ENCODE measurements at regions of chr2 and their contacts with region 1.

Region 1: DNA sequence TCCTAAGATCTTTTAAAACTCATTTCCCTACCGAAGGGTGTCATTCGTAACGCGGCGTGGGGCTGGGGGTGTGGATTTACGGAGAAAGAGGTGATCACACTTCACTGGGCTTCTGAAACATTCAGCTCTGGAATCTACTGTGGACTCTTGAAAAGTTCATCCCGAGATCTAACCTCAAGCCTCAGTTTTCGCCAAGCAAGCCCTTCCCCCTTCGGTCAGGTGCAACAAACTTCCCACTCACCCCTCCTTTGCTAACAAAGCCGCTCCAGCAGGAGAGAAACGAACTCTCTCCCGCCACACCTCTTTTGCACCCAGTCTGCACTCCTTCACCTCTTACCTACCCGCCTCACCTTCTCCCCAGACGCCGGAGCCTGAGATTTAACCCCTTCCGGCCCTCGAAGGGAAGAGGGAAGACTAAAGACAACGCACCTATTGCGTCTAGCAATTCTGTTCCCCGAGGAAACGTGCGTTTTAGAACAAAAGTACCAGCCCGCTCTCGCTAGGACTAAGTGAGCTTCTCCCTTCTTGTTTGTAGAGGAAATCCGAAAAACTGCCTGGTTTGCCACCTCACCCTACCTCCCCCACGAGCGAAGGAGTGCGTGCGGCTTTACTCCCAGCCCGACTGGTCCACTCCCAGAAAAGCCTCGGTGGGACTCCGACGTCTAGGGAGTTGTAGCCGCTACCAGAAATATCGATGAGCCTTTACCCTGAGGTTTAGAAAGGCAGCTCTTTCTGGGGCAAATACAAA is 538 bp upstream of the PEX13 start:
- DNase-seq: peak; percentile 92
- H3K4me3 Mint-ChIP-seq: peak overlapping the region; percentile 99
- H3K27ac Mint-ChIP-seq: peak overlapping the region; percentile 99
- H3K4me1 Mint-ChIP-seq: peaks cover 32% of the 10 kb centered on the region
- H3K27me3 Mint-ChIP-seq: no peaks in the 10 kb centered on the region

Region 2: GRCh38 chr2:60756191-60757041 is 260.6 kb before region 1 on chr2 and contains the start of gene PAPOLG:
- intact Hi-C with region 1: loop called (anchors 1 kb)
- DNase-seq: peak; percentile 99
- H3K4me3 Mint-ChIP-seq: peak within 1 kb of the TSS; percentile 97
- H3K27ac Mint-ChIP-seq: peak within 1 kb of the TSS; percentile 99
- H3K4me1 Mint-ChIP-seq: peaks cover 29% of the 10 kb centered on the region
- H3K27me3 Mint-ChIP-seq: no peaks in the 10 kb centered on the region
- total RNA-seq, gene PAPOLG: 18.1 and 21.6 TPM in 2 replicates

Region 3: DNA sequence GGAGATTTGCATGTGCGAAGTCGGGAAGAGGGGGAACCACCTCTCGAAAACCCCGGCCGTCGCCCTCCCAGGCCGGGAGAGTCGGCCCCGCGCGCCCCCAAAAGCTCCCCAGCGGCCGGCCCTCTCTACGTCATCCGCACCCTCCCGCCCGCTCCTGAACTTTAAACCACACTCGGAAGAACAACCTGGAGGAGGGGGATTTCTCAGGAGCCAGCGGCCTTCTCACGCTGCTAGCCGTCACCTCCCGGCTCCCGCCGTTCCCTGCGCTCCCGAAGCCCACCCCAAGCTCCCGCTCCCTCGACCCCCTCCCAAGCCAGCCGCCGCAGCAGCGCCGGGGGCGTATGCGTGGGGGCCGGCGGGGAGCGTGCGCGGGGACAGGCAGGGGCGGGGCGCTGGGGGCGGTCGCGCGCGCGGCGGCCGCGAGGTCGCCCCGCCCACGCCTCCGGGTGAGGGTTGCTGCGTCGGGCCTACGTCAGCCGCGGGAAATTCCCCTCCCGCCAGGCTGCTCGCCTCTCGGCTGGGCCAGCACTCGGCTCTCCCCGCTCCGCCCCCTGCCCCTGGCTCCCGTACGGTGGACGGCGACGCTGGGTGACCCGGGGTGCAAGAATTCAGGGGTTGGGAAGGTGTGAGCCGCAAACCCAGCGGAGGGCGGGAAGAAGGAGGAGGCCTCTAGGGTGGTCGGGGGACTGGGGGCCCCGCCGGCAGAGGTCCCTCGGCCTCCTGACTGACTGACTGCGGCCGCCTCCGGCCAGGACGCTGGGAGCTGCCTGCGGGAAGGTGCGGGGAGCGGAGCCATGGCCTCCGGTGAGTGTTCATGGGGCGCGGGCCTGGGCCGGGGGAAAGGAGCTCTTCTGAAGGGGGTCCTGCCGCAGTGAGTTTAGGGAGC is 135.7 kb before region 1 on chr2 and contains the start of gene REL:
- intact Hi-C with region 1: loop called (anchors 2 kb)
- DNase-seq: peak; percentile 97
- H3K4me3 Mint-ChIP-seq: peak within 1 kb of the TSS; percentile 97
- H3K27ac Mint-ChIP-seq: peak within 1 kb of the TSS; percentile 97
- H3K4me1 Mint-ChIP-seq: peaks cover 21% of the 10 kb centered on the region
- H3K27me3 Mint-ChIP-seq: no peaks in the 10 kb centered on the region
- total RNA-seq, gene REL: 84.9 and 88.7 TPM in 2 replicates

Region 4: DNA sequence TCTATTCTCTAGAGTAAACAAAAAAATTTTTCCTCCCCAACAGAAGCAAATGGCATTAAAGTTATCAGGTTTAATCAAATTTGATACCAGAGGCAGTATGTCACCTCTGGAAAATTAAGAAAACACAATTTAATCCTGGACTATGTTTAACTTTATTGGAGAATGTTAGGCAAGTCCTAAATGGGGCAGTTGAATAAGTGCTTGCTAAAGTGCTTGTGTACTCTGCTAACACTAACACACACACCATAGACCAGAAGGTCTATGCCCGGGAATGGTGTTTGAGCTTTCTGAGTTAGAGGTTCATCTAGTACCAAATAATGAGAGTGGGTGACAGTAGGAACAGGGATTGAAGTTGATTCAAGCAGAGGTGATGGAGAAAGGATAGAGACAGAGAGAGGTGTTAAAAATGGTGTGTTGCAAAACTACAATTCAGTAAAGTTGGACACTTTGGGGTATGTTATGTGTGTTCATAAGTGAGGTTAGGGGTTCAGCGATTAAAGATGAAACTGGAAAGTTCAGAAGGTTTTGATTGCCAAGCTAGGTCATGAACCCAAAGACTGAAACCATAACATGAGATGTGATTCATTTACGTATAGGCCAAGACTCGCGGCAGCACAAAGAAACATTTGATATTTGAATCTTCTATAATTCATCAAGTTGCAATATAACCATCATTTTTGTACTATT is 40.0 kb before region 1 on chr2:
- intact Hi-C with region 1: loop called (anchors 2 kb)
- DNase-seq: no peak
- H3K4me3 Mint-ChIP-seq: no peak overlapping the region
- H3K27ac Mint-ChIP-seq: peak overlapping the region; percentile 46
- H3K4me1 Mint-ChIP-seq: peaks cover 30% of the 10 kb centered on the region
- H3K27me3 Mint-ChIP-seq: no peaks in the 10 kb centered on the region

Region 5: DNA sequence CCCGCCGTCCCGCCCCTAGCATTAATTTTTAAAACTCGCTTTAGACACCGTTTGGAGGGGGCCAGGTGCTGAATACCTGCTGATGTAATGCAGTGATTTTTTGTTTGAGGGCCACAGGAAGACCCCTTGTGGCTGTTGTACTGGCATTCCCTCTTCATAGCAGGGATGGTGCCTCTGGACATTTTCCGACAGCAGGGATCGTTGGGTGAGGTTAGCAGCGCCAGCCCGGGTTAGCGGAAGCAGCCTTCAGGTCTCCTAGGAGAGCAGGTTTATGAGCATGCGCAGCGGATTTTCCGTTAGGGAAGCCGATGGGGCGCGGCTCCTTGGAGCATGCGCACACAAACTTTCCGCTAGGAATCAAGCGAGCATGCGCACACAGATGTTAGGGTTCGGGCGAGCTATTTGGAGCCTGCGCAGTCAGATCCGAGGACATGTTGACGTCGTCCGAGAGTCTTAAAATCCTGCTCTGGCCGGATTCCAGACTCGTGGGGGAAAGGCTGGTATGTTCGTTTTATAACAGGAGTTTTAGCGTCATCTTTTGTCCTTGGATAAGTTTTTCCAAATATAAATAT is 127.8 kb after region 1 on chr2:
- intact Hi-C with region 1: loop called (anchors 1 kb)
- DNase-seq: peak; percentile 98
- H3K4me3 Mint-ChIP-seq: peak overlapping the region; percentile 88
- H3K27ac Mint-ChIP-seq: peak overlapping the region; percentile 88
- H3K4me1 Mint-ChIP-seq: peaks cover 6% of the 10 kb centered on the region
- H3K27me3 Mint-ChIP-seq: peaks cover 2% of the 10 kb centered on the region

Region 6: DNA sequence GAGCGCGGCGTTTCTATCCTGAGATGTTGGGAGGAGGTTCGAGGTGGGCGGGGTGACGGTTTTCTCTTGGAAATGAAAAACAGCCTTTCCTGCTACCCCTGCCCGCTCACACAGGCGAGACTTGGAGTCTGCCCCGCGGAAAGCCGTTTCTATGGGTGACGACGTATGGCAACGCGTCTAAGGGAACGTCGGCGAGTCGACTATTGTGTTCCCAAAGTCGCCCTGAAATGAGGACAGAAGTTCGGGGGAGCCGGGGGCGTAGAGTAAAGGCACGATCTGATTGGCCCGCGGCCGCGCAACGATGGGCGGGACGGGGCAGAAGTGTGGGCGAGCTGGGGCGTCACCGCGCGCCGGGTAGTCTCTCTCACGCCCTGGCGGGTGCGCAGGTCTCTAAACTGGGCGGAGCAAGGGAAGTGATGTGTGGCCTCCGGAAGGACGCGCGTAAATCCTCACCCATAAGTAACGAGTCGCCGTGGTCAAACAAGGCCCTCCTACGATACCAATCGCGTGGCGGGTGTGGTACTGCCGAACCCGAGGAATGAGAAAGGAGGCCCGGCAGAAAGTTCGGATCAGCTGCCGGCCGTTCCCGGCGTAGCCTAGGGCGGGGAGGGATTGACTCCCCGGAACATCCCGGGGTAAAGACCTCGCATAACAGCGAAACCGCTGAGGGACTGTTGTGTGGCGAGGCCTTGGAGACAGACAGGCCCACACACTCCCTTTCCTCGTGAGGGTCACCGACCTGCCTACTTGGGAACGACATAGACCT is 747.2 kb after region 1 on chr2:
- intact Hi-C with region 1: loop called (anchors 5 kb)
- DNase-seq: peak; percentile 99
- H3K4me3 Mint-ChIP-seq: peak overlapping the region; percentile 95
- H3K27ac Mint-ChIP-seq: peak overlapping the region; percentile 97
- H3K4me1 Mint-ChIP-seq: peaks cover 12% of the 10 kb centered on the region
- H3K27me3 Mint-ChIP-seq: peaks cover 1% of the 10 kb centered on the region